ENCODE measurements at regions of chr1 and their contacts with region 1.

Region 1: DNA sequence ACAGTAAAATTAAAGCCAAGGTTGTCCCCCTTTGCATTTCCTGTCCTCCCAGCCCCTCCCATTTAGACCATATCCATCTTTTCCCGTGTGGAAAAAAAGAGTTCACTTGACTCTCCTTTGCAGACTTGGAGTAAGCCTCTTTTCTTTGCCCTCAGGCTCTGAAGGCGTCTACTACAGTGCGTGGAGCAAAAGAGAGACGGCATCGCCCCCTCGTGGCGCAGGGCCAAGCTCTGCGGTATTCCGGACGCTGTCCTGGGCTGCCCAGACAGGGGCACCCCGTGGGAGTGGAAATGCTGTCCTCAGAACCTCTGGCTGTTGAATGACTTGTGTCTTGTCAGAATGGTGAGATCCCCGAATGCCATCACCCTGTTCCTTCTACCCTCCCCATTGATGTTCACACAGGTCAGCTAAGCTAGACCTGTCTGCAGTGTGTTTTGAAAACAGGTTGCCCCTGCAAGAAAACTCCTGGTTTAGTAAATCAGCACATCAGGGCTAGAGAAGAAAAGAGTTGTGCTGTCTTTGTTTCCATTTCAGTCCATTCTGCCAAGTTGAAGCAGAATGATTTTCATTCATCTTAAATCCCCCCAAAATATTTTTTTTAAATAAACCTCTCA is 12.3 kb upstream of the GJA8 start:
- DNase-seq: no peak
- ATAC-seq: peak; percentile 95
- H3K4me3 ChIP-seq: no peak overlapping the region
- H3K27ac ChIP-seq: no peak overlapping the region
- H3K4me1 ChIP-seq: no peaks in the 10 kb centered on the region
- H3K27me3 ChIP-seq: no peaks in the 10 kb centered on the region
- CTCF ChIP-seq: peak; percentile 82

Region 2: DNA sequence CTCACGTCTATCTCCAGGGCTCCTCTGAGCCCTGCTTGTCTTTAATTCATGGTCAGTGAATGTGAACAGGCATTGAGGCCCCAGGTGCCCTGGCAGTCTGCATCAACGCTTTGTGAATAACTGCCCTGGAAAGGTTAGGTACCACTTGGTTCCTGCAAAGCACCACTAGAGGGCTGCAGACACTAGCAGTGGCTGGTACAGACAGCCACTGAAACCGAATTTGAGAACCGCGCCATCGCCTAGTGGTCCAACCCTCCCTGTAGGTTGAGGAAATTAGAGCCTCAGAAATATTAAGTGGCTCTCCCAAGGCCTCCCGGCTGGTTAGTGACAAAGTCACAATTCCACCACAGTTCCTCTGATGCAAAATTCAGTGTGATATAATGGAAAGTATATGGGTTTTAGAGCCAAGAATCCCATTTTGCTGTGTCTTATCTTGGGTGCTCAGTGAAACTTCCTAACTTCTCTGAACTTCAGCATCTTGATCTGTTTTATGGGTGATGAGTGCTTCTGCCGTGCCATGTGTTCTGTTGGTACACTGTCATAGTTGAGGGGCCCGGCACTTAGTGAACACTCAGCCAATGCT is 395.2 kb before region 1 on chr1:
- CTCF ChIA-PET with region 1: interaction called, 3 read pairs
- POLR2A ChIA-PET with region 1: no interaction called
- in situ Hi-C with region 1: no loop called
- intact Hi-C with region 1: loop called (anchors 2 kb)
- DNase-seq: peak; percentile 46
- ATAC-seq: peak; percentile 99
- H3K4me3 ChIP-seq: no peak overlapping the region
- H3K27ac ChIP-seq: no peak overlapping the region
- H3K4me1 ChIP-seq: no peaks in the 10 kb centered on the region
- H3K27me3 ChIP-seq: 0 out of 2 replicates have a peak, but pooled peaks cover under 1% of the 10 kb centered on the region
- CTCF ChIP-seq: peak; percentile 95

Region 3: GRCh38 chr1:147599362-147600118 is 290.7 kb before region 1 on chr1:
- CTCF ChIA-PET with region 1: interaction called, 11 read pairs
- POLR2A ChIA-PET with region 1: no interaction called
- in situ Hi-C with region 1: no loop called
- intact Hi-C with region 1: no loop called
- DNase-seq: peak; percentile 32
- ATAC-seq: peak; percentile 94
- H3K4me3 ChIP-seq: peak overlapping the region; percentile 72 to 81
- H3K27ac ChIP-seq: peak overlapping the region; percentile 72
- H3K4me1 ChIP-seq: peaks cover 9% of the 10 kb centered on the region
- H3K27me3 ChIP-seq: peaks cover 14% of the 10 kb centered on the region
- CTCF ChIP-seq: no peak

Region 4: DNA sequence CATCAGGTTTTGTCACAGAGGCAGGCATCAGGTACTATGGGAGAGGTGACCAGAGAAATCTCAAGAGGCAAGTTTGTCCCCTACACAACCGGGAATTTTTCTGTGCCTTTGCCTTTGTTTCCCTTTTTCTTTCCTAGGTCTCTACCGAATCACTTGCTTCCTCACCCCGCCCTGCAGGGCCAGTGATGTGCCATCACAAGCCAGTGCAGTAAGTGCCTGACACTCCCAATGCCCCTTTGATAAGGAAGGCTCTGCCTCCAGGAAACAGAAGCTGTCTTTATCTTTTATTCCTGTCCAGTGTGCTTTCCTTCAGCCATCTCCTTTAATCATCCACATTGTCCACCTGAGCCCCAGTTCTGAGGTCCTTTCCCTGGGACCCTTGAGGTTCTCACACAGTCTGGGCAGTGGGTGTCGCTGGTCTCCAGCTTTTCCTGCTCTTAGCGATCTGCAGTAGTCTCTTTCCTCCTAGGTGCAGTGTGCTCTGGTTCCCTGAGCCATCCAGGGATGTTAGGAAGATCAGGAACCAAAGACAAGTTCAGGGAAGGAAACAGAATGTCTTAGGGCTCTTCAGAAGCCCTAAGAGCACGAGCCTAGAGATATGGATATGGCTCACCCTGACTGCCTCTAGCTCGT is 166.5 kb before region 1 on chr1:
- CTCF ChIA-PET with region 1: interaction called, 7 read pairs
- POLR2A ChIA-PET with region 1: no interaction called
- in situ Hi-C with region 1: no loop called
- intact Hi-C with region 1: loop called (anchors 5 kb)
- DNase-seq: no peak
- ATAC-seq: peak; percentile 93
- H3K4me3 ChIP-seq: no peak overlapping the region
- H3K27ac ChIP-seq: no peak overlapping the region
- H3K4me1 ChIP-seq: no peaks in the 10 kb centered on the region
- H3K27me3 ChIP-seq: no peaks in the 10 kb centered on the region
- CTCF ChIP-seq: peak; percentile 68

Region 5: DNA sequence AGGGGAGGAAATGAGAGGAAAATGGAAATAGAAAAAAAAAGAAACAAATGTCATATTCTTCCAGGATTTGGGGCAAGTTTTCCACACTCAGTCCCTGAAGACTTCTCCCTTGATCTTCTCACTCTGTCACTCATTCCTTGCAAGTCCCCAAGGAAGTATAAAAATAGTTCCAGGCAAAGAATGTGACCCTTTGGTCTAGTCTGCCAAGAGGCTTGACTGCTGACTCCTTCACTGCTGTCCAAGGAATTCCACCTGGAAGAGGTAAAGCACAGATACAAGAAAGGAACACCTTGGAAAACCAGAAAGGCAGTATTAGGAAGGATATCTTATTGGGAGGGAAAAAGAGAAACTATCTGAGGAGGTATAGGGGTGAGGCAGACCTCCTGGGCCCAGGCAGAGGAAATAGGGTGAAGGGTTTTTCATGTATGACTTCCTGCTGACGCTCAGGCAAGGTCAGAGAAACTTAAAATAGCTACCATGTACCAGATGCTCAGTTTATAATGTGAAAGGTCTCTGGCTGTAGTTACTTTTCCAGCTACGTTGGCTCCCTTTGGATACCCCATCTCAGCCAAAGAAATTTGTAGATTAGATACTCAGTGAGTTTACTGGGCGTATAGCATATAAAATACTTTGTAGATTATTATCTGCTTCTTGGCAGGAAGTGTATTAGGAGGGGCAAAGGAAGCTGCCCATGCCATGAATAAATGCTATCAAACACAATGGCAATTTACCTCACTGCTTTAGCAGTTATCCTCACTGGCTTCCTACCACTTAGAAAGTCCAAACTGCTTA is 127.9 kb before region 1 on chr1:
- CTCF ChIA-PET with region 1: no interaction called
- POLR2A ChIA-PET with region 1: no interaction called
- in situ Hi-C with region 1: no loop called
- intact Hi-C with region 1: no loop called
- DNase-seq: no peak
- ATAC-seq: no peak
- H3K4me3 ChIP-seq: no peak overlapping the region
- H3K27ac ChIP-seq: no peak overlapping the region
- H3K4me1 ChIP-seq: no peaks in the 10 kb centered on the region
- H3K27me3 ChIP-seq: no peaks in the 10 kb centered on the region
- CTCF ChIP-seq: no peak

Region 6: DNA sequence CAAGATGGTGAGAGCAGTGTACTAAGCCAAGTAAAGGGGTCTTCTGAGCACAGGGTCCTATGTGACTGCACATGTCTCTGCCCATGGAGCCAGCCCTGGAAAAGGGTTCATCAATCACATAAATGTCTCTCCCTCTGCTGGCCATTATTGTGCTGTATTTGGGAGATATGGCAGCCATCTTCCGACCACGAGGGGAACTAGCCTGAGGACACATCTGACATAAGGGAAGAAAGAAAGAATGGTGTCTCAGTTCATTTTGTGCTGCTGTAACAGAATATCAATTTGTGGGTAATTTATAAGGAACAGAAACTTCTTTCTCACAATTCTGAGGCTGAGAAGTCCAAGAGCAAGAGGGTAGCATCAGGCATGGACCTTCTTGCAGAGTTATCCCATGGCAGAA is 74.8 kb before region 1 on chr1:
- CTCF ChIA-PET with region 1: no interaction called
- POLR2A ChIA-PET with region 1: no interaction called
- in situ Hi-C with region 1: no loop called
- intact Hi-C with region 1: no loop called
- DNase-seq: no peak
- ATAC-seq: no peak
- H3K4me3 ChIP-seq: no peak overlapping the region
- H3K27ac ChIP-seq: no peak overlapping the region
- H3K4me1 ChIP-seq: no peaks in the 10 kb centered on the region
- H3K27me3 ChIP-seq: no peaks in the 10 kb centered on the region; the same call in none of the 2 replicates
- CTCF ChIP-seq: peak; percentile 18; the same call in 1 of the 2 replicates